AG04450 (cell line): ENCODE measurements at regions of chr17 and their contacts with region 1.

Region 1: GRCh38 chr17:60641810-60642220 is 35.8 kb upstream of the BCAS3 start:
- DNase-seq: peak; percentile 53
- H3K4me3 ChIP-seq: no peak overlapping the region
- H3K27ac ChIP-seq: no peak overlapping the region
- H3K27me3 ChIP-seq: no peaks in the 10 kb centered on the region
- CTCF ChIP-seq: peak; percentile 61

Region 2: DNA sequence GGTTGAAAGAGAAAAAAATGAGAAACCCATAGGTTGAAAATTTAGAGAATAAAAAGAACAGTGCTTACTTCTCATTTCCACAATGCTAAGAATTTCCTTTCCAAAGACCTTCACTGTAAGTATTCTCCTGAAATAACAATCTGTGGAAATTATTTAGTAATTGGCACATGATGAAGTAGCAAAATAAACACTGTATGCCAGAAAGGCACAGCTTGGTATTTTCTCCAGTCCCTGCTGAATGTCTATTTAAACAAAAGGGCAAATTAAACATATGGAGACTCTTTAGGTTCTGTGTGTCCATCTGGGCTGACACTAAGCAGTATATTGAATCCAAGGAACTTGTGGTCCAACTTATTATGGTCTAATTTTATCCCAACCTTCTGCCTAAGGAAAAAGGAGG is 173.4 kb before region 1 on chr17:
- CTCF ChIA-PET with region 1: interaction called, 14 read pairs
- POLR2A ChIA-PET with region 1: no interaction called
- DNase-seq: peak; percentile 4
- H3K4me3 ChIP-seq: no peak overlapping the region
- H3K27ac ChIP-seq: no peak overlapping the region
- H3K27me3 ChIP-seq: no peaks in the 10 kb centered on the region
- CTCF ChIP-seq: no peak

Region 3: GRCh38 chr17:60599620-60600489 is 42.0 kb before region 1 on chr17 and contains the start of gene PPM1D:
- CTCF ChIA-PET with region 1: interaction called, 32 read pairs
- POLR2A ChIA-PET with region 1: interaction called, 4 read pairs
- DNase-seq: peak; percentile 98
- H3K4me3 ChIP-seq: peak within 1 kb of the TSS; percentile 99
- H3K27ac ChIP-seq: peak within 1 kb of the TSS; percentile 94
- H3K27me3 ChIP-seq: no peaks in the 10 kb centered on the region
- CTCF ChIP-seq: no peak
- polyA plus RNA-seq, gene PPM1D: 8.0 and 12.2 TPM in 2 replicates

Region 4: GRCh38 chr17:60630352-60630751 is 11.5 kb before region 1 on chr17:
- CTCF ChIA-PET with region 1: interaction called, 27 read pairs
- POLR2A ChIA-PET with region 1: no interaction called
- DNase-seq: no peak
- H3K4me3 ChIP-seq: no peak overlapping the region
- H3K27ac ChIP-seq: no peak overlapping the region
- H3K27me3 ChIP-seq: no peaks in the 10 kb centered on the region
- CTCF ChIP-seq: no peak